Activated naive CD4-positive, alpha-beta T cell treated with anti-CD3 and anti-CD28 coated beads for 36 hours (primary cell): ENCODE measurements at regions of chr1 and their contacts with region 1.

Region 1: GRCh38 chr1:165355977-165356811 is at the start of gene LMX1A:
- DNase-seq: no peak
- H3K4me3 Mint-ChIP-seq: no peak within 1 kb of the TSS
- H3K27ac Mint-ChIP-seq: no peak within 1 kb of the TSS
- H3K4me1 Mint-ChIP-seq: peaks cover 23% of the 10 kb centered on the region
- H3K27me3 Mint-ChIP-seq: peaks cover 68% of the 10 kb centered on the region
- total RNA-seq, gene LMX1A: not detected

Region 2: DNA sequence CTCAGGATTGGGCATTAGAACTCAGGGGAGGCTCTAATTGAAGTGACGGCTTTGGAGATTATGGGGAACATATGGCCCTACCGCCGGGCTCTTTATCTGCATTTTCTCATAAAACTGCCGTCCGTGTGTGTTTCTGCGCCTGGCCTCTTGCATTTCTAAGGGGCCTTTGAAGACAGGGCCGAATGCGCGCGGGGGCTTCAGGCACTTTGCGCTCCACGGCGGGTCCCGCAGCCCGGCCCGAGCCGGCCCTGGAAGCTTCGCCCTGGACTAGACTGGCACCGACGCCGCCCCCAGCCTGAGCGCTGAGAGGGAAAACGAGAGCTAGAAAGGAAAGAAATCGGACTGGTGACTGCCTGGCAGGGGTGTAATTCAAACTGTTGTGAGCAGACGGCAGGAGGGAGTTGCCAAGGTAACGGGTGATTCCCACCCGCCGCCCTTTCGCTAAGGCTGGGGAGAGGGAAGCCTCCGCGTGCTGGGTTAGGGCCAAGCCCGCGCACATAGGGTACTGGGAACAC is 120.4 kb before region 1 on chr1:
- CTCF ChIA-PET with region 1: no interaction called
- intact Hi-C with region 1: loop called (anchors 2 kb)
- DNase-seq: peak; percentile 11
- H3K4me3 Mint-ChIP-seq: no peak overlapping the region
- H3K27ac Mint-ChIP-seq: no peak overlapping the region
- H3K4me1 Mint-ChIP-seq: peaks cover 8% of the 10 kb centered on the region
- H3K27me3 Mint-ChIP-seq: peaks cover 52% of the 10 kb centered on the region

Region 3: DNA sequence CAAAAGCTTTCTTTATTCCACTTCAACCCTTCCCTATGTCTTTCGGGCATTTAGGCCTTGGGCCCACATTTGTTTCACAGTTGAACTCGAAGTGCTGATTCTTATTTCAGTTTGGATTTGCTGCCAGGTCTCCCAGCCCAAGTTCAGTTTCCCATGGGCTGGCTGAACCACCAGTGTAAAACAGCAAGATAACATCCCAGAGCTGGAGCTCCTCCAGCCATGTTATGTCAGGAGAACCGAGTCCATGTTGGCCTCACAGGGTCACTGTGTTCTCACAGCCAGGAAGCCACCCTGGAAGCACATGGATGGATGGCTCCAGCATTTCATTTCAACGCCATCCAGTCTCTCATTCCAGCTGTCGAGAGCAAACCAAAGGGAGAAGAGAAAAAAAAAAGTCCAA is 134.0 kb after region 1 on chr1:
- CTCF ChIA-PET with region 1: no interaction called
- intact Hi-C with region 1: no loop called
- DNase-seq: no peak
- H3K4me3 Mint-ChIP-seq: no peak overlapping the region
- H3K27ac Mint-ChIP-seq: no peak overlapping the region
- H3K4me1 Mint-ChIP-seq: peaks cover 2% of the 10 kb centered on the region
- H3K27me3 Mint-ChIP-seq: peaks cover 16% of the 10 kb centered on the region